ENCODE measurements at regions of chr14 and their contacts with region 1.

Region 1: GRCh38 chr14:50342221-50343078 is 30.3 kb downstream of the DMAC2L start:
- DNase-seq: peak in 7 of 9 donors; percentile 22 to 59 (median 39)
- ATAC-seq: peak; percentile 83
- H3K4me3 ChIP-seq: no peak overlapping the region
- H3K4me3 Mint-ChIP-seq: peak overlapping the region in 1 of 10 donors; percentile 59
- H3K27ac ChIP-seq: no peak overlapping the region
- H3K27ac Mint-ChIP-seq: peak overlapping the region in 2 of 9 donors; percentile 31 to 66
- H3K4me1 ChIP-seq: no peaks in the 10 kb centered on the region
- H3K4me1 Mint-ChIP-seq: peaks cover 0 to 23% (median 16%) of the 10 kb centered on the region in 7 donors
- H3K27me3 ChIP-seq: no peaks in the 10 kb centered on the region
- H3K27me3 Mint-ChIP-seq: peaks cover 0 to 11% (median 0%) of the 10 kb centered on the region in 5 donors

Region 2: GRCh38 chr14:50354527-50354926 is 12.1 kb after region 1 on chr14:
- CTCF ChIA-PET with region 1: no interaction called
- POLR2A ChIA-PET with region 1: no interaction called
- intact Hi-C with region 1: no loop called
- DNase-seq: no peak
- ATAC-seq: no peak
- H3K4me3 ChIP-seq: no peak overlapping the region
- H3K4me3 Mint-ChIP-seq: no peak overlapping the region
- H3K27ac ChIP-seq: no peak overlapping the region
- H3K27ac Mint-ChIP-seq: no peak overlapping the region
- H3K4me1 ChIP-seq: no peaks in the 10 kb centered on the region
- H3K4me1 Mint-ChIP-seq: peaks cover 0 to 12% (median 4%) of the 10 kb centered on the region in 7 donors
- H3K27me3 ChIP-seq: no peaks in the 10 kb centered on the region
- H3K27me3 Mint-ChIP-seq: no peaks in the 10 kb centered on the region

Region 3: GRCh38 chr14:50447461-50447860 is 105.0 kb after region 1 on chr14:
- CTCF ChIA-PET with region 1: no interaction called
- POLR2A ChIA-PET with region 1: no interaction called
- intact Hi-C with region 1: loop called in 1 of 2 experiments (anchors 5 kb)
- DNase-seq: no peak
- ATAC-seq: no peak
- H3K4me3 ChIP-seq: no peak overlapping the region
- H3K4me3 Mint-ChIP-seq: no peak overlapping the region
- H3K27ac ChIP-seq: no peak overlapping the region
- H3K27ac Mint-ChIP-seq: no peak overlapping the region
- H3K4me1 ChIP-seq: no peaks in the 10 kb centered on the region
- H3K4me1 Mint-ChIP-seq: no peaks in the 10 kb centered on the region
- H3K27me3 ChIP-seq: no peaks in the 10 kb centered on the region
- H3K27me3 Mint-ChIP-seq: no peaks in the 10 kb centered on the region